PC-9 (cell line): ENCODE measurements at regions of chr5 and their contacts with region 1.

Region 1: GRCh38 chr5:24788829-24789509 is 144.2 kb upstream of the CDH10 start:
- DNase-seq: peak; percentile 47 to 86
- H3K4me3 ChIP-seq: no peak overlapping the region
- H3K27ac ChIP-seq: peak overlapping the region; percentile 77
- H3K4me1 ChIP-seq: peaks cover 17% of the 10 kb centered on the region
- H3K27me3 ChIP-seq: no peaks in the 10 kb centered on the region
- CTCF ChIP-seq: no peak

Region 2: GRCh38 chr5:23385036-23385435 is 1403.9 kb before region 1 on chr5:
- CTCF ChIA-PET with region 1: no interaction called
- POLR2A ChIA-PET with region 1: no interaction called
- intact Hi-C with region 1: no loop called
- DNase-seq: no peak
- H3K4me3 ChIP-seq: no peak overlapping the region
- H3K27ac ChIP-seq: no peak overlapping the region
- H3K4me1 ChIP-seq: no peaks in the 10 kb centered on the region
- H3K27me3 ChIP-seq: no peaks in the 10 kb centered on the region
- CTCF ChIP-seq: no peak

Region 3: DNA sequence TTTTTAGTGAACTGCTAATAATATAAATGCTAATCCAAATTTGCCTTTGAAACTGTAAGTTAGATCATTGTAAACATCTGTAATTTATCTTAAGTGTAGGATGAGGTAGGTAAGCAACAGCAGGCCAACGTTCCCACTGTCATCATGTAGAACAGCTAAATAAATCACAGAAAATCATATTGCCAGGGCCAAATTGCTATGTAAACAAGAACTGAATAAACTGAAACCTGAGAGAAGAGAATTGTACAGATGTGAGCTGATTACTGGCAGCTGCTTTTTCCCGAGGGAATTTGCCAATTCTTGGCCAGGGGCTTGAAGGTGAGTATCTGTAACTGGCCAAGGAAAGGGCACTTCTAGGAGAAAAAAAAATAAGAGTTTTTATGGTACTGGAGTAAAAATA is 241.8 kb before region 1 on chr5:
- CTCF ChIA-PET with region 1: no interaction called
- POLR2A ChIA-PET with region 1: no interaction called
- intact Hi-C with region 1: no loop called
- DNase-seq: no peak
- H3K4me3 ChIP-seq: no peak overlapping the region
- H3K27ac ChIP-seq: no peak overlapping the region
- H3K4me1 ChIP-seq: no peaks in the 10 kb centered on the region
- H3K27me3 ChIP-seq: no peaks in the 10 kb centered on the region
- CTCF ChIP-seq: no peak

Region 4: GRCh38 chr5:24714746-24715145 is 74.2 kb before region 1 on chr5:
- CTCF ChIA-PET with region 1: no interaction called
- POLR2A ChIA-PET with region 1: no interaction called
- intact Hi-C with region 1: no loop called
- DNase-seq: no peak
- H3K4me3 ChIP-seq: no peak overlapping the region
- H3K27ac ChIP-seq: no peak overlapping the region
- H3K4me1 ChIP-seq: no peaks in the 10 kb centered on the region
- H3K27me3 ChIP-seq: no peaks in the 10 kb centered on the region
- CTCF ChIP-seq: no peak

Region 5: DNA sequence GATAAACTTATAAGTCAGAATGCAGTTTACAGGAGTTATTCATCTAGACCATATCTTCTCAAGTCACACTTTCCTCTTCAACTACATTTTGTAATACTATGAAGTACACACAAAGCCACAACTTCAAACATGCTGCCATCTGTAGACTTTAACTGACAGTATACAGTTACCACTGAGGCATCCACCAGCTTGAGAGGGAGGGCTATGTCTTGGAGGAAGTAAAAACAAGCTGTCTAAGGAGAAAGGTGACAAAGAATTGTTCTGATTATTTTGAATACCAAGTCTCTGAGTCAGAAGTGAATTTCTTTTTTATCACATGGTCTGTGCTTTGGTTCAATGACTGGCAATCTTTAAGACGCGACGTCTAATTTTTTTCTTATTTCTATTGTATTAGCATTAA is 46.6 kb before region 1 on chr5:
- CTCF ChIA-PET with region 1: no interaction called
- POLR2A ChIA-PET with region 1: interaction called, 16 read pairs
- intact Hi-C with region 1: no loop called
- DNase-seq: peak; percentile 39 to 48
- H3K4me3 ChIP-seq: no peak overlapping the region
- H3K27ac ChIP-seq: no peak overlapping the region
- H3K4me1 ChIP-seq: no peaks in the 10 kb centered on the region
- H3K27me3 ChIP-seq: no peaks in the 10 kb centered on the region
- CTCF ChIP-seq: no peak

Region 6: DNA sequence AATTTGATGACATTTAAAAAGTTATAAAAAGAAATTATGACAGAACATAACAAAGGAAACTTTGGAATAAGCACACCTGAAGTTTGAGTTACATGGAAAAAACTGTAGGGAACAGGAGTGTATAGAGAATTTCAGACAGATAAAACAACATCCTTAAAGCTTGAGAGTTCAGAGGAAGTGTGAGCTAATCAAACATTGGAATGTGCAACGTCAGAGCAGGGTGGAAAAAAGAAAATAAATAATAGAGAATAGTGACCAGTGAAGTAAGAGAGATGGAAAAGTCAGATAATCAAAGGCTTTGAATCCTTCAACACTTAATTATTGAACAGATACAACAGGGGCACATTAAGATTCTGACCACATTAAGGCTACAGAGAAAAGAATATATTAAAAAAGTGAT is 15.7 kb before region 1 on chr5:
- CTCF ChIA-PET with region 1: no interaction called
- POLR2A ChIA-PET with region 1: interaction called, 6 read pairs
- intact Hi-C with region 1: loop called (anchors 1 kb)
- DNase-seq: no peak
- H3K4me3 ChIP-seq: no peak overlapping the region
- H3K27ac ChIP-seq: no peak overlapping the region
- H3K4me1 ChIP-seq: no peaks in the 10 kb centered on the region
- H3K27me3 ChIP-seq: no peaks in the 10 kb centered on the region
- CTCF ChIP-seq: no peak

Region 7: GRCh38 chr5:24804221-24804681 is 15.3 kb after region 1 on chr5:
- CTCF ChIA-PET with region 1: no interaction called
- POLR2A ChIA-PET with region 1: no interaction called
- intact Hi-C with region 1: loop called (anchors 1 kb)
- DNase-seq: peak; percentile 61 to 66
- H3K4me3 ChIP-seq: no peak overlapping the region
- H3K27ac ChIP-seq: 0 out of 2 replicates have a peak overlapping the region, but pooled peaks have one; percentile 9
- H3K4me1 ChIP-seq: no peaks in the 10 kb centered on the region; the same call in 1 of the 2 replicates
- H3K27me3 ChIP-seq: no peaks in the 10 kb centered on the region
- CTCF ChIP-seq: no peak

Region 8: GRCh38 chr5:24823625-24824024 is 34.7 kb after region 1 on chr5:
- CTCF ChIA-PET with region 1: no interaction called
- POLR2A ChIA-PET with region 1: interaction called, 4 read pairs
- intact Hi-C with region 1: loop called (anchors 2 kb)
- DNase-seq: peak; percentile 70 to 95
- H3K4me3 ChIP-seq: no peak overlapping the region
- H3K27ac ChIP-seq: no peak overlapping the region
- H3K4me1 ChIP-seq: no peaks in the 10 kb centered on the region
- H3K27me3 ChIP-seq: no peaks in the 10 kb centered on the region
- CTCF ChIP-seq: no peak

Region 9: GRCh38 chr5:24905121-24905520 is 116.2 kb after region 1 on chr5:
- CTCF ChIA-PET with region 1: no interaction called
- POLR2A ChIA-PET with region 1: interaction called, 4 read pairs
- intact Hi-C with region 1: loop called (anchors 1 kb)
- DNase-seq: peak; percentile 67 to 80
- H3K4me3 ChIP-seq: no peak overlapping the region
- H3K27ac ChIP-seq: no peak overlapping the region
- H3K4me1 ChIP-seq: no peaks in the 10 kb centered on the region; the same call in 1 of the 2 replicates
- H3K27me3 ChIP-seq: no peaks in the 10 kb centered on the region
- CTCF ChIP-seq: no peak

Region 10: GRCh38 chr5:25029004-25029403 is 240.0 kb after region 1 on chr5:
- CTCF ChIA-PET with region 1: no interaction called
- POLR2A ChIA-PET with region 1: no interaction called
- intact Hi-C with region 1: no loop called
- DNase-seq: no peak
- H3K4me3 ChIP-seq: no peak overlapping the region
- H3K27ac ChIP-seq: no peak overlapping the region
- H3K4me1 ChIP-seq: no peaks in the 10 kb centered on the region
- H3K27me3 ChIP-seq: no peaks in the 10 kb centered on the region
- CTCF ChIP-seq: no peak